Vagina (tissue), 2 donors: ENCODE measurements at regions of chr18 and their contacts with region 1.

Region 1: DNA sequence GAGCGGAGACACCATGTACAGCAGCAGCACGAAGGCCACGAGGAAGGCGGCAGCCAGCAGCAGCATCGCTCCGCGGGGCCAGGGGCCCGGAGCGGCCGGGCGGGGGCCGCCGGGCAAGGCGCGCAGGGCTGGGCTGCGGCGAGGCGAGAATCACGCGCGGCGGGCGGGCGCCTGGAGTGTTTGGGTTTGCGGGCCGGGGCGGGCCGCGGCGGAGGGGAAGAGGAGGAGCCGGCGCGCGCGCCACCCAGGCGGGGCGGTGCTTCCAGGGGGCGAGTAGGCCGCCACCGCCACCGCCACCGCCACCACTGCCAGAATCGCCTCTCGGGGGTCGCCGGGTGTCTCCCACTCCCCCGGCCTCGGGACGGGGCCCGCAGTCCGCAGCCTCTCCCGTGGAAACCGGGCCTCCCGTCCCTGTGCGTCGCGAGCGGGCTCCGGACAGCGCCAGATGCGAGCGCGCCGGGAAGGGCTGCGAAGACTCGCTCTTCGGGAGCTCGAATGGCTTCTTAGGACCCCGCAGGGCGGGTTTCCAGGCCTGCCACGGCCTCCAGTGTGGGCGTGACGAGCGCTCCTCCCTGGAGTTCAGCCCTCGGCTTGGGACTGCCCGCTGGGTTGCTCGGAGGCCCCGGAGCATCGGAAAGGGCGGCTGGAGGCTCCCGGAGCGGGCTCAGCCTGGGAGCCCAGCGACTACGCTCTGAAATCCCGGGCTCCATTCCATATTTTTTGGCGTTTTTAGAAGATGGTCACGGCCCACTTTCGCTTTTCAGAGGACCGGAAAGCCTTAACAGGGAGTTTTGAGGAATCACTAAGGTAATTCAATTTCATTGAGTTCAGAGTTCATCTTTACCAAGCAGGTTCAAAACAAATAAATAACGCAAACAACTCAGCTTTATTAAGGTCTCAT is at the start of gene KDSR:
- DNase-seq: peak in 1 of 2 donors; percentile 96
- H3K4me3 ChIP-seq: peak within 1 kb of the TSS; percentile 61 to 89
- H3K27ac ChIP-seq: peak within 1 kb of the TSS; percentile 97
- H3K4me1 ChIP-seq: peaks cover 32% of the 10 kb centered on the region
- H3K27me3 ChIP-seq: no peaks in the 10 kb centered on the region
- CTCF ChIP-seq: no peak
- POLR2A ChIP-seq: peak in 1 of 2 donors; percentile 47
- total RNA-seq, gene KDSR: 42.0 TPM

Region 2: GRCh38 chr18:63111671-63112402 is 255.5 kb before region 1 on chr18:
- intact Hi-C with region 1: no loop called
- DNase-seq: no peak
- H3K4me3 ChIP-seq: no peak overlapping the region
- H3K27ac ChIP-seq: no peak overlapping the region
- H3K4me1 ChIP-seq: no peaks in the 10 kb centered on the region
- H3K27me3 ChIP-seq: no peaks in the 10 kb centered on the region
- CTCF ChIP-seq: no peak
- POLR2A ChIP-seq: no peak

Region 3: DNA sequence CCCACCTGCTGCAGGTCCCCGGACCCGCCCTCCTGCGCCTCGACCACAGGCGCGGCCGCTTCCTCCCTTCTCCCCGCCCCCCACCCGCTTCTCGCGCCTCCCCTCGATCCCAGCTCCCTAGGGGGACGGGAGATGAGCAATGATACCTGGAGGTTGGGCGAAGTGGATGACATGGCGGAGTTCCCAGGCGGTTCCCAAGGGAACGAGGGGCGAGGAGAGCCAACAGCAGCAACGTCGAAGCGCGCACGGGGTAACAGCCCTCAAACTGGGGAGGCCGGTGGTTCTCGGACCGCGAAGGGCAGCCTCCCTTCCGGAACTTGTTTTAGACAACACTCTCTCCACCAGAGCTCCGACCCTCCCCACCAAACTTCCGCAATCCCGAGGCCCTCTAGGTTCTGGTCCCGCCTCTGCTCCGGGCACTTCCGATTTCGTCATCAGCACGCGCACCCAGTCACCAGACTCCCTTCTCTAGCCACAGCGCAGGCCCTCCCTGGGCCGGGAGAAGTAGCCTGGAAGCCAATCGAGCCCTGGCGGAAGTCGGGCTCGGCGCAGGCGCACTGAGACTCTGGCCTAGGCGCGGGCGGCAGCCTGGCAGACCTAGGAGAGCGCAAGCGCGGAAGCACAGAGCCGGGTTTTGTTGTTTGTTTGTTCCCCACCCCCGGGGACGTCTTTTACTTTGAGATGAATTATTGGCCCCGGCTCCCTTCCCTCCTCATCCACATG is 54.9 kb after region 1 on chr18 and contains the start of gene VPS4B:
- intact Hi-C with region 1: loop called (anchors 2 kb)
- DNase-seq: peak; percentile 99
- H3K4me3 ChIP-seq: peak within 1 kb of the TSS; percentile 90 to 91
- H3K27ac ChIP-seq: peak within 1 kb of the TSS; percentile 98
- H3K4me1 ChIP-seq: peaks cover 38% of the 10 kb centered on the region
- H3K27me3 ChIP-seq: no peaks in the 10 kb centered on the region
- CTCF ChIP-seq: no peak
- POLR2A ChIP-seq: peak in 1 of 2 donors; percentile 67
- total RNA-seq, gene VPS4B: 30.7 TPM